IMR-90 (cell line): ENCODE measurements at regions of chr10 and their contacts with region 1.

Region 1: DNA sequence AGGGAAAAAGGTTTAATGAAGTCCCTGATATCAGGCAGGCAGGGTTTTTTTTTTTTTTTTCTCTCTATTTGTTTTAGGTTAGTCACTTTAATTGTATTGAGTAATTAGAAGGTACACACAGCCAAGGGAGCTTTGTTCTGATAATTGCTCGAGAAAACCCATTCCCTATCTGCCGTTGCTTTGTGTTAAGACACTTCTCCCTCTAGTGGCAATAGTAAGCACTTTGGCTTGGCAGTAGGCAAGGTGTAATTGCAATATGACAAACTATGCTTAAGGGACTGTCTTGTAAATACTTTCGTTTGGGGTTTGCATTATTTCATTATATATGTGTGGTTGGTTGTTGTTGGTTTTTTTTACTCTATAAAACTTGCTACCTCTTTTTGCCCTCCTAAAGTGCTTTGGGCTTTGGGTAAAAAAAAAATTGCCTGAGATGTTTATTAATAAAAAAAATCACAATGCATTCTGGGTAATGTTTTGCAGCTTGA is 113.4 kb downstream of the BTRC start:
- DNase-seq: peak; percentile 78
- ATAC-seq: peak; percentile 93
- H3K4me3 ChIP-seq: no peak overlapping the region
- H3K27ac ChIP-seq: no peak overlapping the region
- H3K4me1 ChIP-seq: peaks cover 2% of the 10 kb centered on the region; the same call in 1 of the 2 replicates
- H3K27me3 ChIP-seq: no peaks in the 10 kb centered on the region
- CTCF ChIP-seq: peak; percentile 79
- POLR2A ChIP-seq: no peak
- RAD21 ChIP-seq: peak; percentile 60

Region 2: DNA sequence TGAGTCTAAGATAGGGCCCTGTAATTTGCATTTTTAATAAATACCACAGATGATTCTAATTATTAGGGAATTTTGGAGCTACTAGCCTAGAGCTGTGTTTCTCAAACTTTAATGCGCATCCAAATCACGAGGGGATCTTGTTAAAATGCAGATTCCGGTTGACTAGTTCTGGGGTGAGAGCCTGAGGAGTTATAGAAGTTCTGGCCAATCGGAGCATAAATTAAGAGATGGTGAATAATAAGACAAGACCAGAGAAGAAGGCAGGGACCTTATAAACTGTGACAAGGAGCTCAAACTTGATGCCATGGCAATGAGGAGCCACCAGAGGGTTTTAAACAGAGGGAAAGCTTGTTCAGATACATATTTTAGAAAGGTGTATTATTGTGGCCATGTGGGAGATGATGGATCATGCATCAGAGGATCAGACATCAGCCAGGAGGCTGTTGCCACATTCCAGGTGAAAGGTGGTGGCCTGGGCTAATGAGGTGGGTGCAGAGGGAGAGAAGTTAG is 365.9 kb before region 1 on chr10:
- CTCF ChIA-PET with region 1: no interaction called
- POLR2A ChIA-PET with region 1: no interaction called
- dilution Hi-C with region 1: no loop called
- in situ Hi-C with region 1: no loop called
- intact Hi-C with region 1: no loop called
- DNase-seq: no peak
- ATAC-seq: no peak
- H3K4me3 ChIP-seq: no peak overlapping the region
- H3K27ac ChIP-seq: no peak overlapping the region
- H3K4me1 ChIP-seq: no peaks in the 10 kb centered on the region
- H3K27me3 ChIP-seq: peaks cover 69% of the 10 kb centered on the region
- CTCF ChIP-seq: no peak
- POLR2A ChIP-seq: no peak
- RAD21 ChIP-seq: no peak

Region 3: DNA sequence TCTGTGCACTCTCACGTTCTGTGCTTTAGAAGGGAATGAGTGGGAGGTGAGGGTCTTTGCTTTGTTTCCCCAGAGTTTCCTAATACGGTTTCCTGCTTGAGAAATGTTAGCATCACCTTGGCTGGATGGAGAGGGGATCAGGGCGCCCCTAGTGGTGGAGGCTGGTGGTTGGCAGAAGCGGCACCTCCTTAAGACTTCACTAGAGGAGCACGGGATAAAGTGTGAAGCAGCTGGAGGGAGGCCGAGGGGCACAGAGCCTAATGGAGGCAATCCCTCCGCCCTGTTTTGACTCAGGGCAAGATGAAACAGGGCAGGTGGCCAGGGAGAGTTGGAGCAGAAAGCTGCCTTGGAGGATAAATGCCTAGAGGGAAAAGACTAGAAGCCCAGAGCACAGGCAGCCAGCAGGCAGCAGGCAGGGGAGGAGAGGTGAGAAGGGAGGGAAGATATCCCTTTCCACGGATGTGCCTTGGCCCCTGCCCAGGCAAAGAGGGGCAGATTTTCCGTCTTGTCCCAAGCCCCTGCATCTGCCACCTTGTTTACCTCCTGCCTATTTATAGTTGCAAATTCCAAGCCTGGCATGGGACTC is 169.3 kb before region 1 on chr10:
- CTCF ChIA-PET with region 1: interaction called, 3 read pairs
- POLR2A ChIA-PET with region 1: no interaction called
- dilution Hi-C with region 1: loop called (anchors 25 kb)
- in situ Hi-C with region 1: no loop called
- intact Hi-C with region 1: no loop called
- DNase-seq: peak; percentile 39
- ATAC-seq: peak; percentile 89
- H3K4me3 ChIP-seq: no peak overlapping the region
- H3K27ac ChIP-seq: no peak overlapping the region
- H3K4me1 ChIP-seq: no peaks in the 10 kb centered on the region
- H3K27me3 ChIP-seq: peaks cover 68% of the 10 kb centered on the region
- CTCF ChIP-seq: peak; percentile 67
- POLR2A ChIP-seq: no peak
- RAD21 ChIP-seq: no peak

Region 4: DNA sequence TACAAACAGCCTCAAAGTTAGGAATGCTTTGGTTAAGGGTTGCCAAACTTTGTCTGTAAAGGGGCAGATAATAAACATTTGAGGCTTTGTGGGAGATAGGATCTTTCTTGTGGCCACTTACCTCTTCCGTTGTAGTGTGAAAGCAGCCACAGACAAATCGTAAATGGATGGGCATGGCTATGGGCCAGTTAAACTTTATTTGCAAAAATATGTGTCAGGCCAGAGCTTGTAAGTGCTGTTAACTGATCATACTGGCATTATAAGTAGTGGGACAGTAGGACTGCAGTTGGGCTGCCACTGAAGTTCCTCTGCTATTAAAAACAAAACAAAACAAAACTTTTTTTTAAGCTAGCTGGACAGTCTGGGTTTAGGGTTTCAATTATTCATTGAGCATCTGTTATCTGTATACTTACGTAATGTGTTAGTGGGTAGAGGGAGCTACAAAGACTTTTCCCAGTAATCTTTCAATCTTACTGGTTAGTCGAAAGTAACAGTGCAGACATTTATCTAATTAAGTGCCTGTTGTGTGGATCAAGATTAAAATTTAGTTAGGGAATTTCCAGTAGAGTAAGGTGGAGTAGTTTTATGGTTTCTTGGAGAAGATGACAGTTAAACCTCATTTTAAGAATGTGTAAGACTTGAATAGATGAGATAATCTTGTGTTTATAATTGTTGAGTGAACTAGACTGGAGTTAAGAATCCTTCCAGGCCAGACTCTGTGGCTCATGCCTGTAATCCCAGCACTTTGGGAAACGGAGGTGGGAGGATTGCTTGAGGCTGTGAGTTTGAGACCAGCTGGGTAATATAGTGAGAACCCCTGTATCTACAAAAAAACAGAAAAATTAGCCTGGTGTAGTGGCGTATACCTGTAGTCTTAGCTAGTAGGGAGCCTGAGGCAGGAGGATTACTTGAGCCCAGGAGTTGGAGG is 13.3 kb before region 1 on chr10:
- CTCF ChIA-PET with region 1: interaction called, 13 read pairs
- POLR2A ChIA-PET with region 1: no interaction called
- dilution Hi-C with region 1: no loop called
- in situ Hi-C with region 1: no loop called
- intact Hi-C with region 1: no loop called
- DNase-seq: peak; percentile 52
- ATAC-seq: peak; percentile 77
- H3K4me3 ChIP-seq: no peak overlapping the region
- H3K27ac ChIP-seq: no peak overlapping the region
- H3K4me1 ChIP-seq: peaks cover 2% of the 10 kb centered on the region
- H3K27me3 ChIP-seq: no peaks in the 10 kb centered on the region
- CTCF ChIP-seq: no peak
- POLR2A ChIP-seq: no peak
- RAD21 ChIP-seq: no peak

Region 5: GRCh38 chr10:101485681-101486554 is 18.6 kb after region 1 on chr10:
- CTCF ChIA-PET with region 1: interaction called, 11 read pairs
- POLR2A ChIA-PET with region 1: no interaction called
- dilution Hi-C with region 1: no loop called
- in situ Hi-C with region 1: no loop called
- intact Hi-C with region 1: no loop called
- DNase-seq: no peak
- ATAC-seq: no peak
- H3K4me3 ChIP-seq: no peak overlapping the region
- H3K27ac ChIP-seq: no peak overlapping the region
- H3K4me1 ChIP-seq: no peaks in the 10 kb centered on the region
- H3K27me3 ChIP-seq: no peaks in the 10 kb centered on the region
- CTCF ChIP-seq: no peak
- POLR2A ChIP-seq: no peak
- RAD21 ChIP-seq: no peak

Region 6: GRCh38 chr10:101512738-101513137 is 45.4 kb after region 1 on chr10:
- CTCF ChIA-PET with region 1: no interaction called
- POLR2A ChIA-PET with region 1: no interaction called
- dilution Hi-C with region 1: no loop called
- in situ Hi-C with region 1: no loop called
- intact Hi-C with region 1: no loop called
- DNase-seq: peak; percentile 78
- ATAC-seq: peak; percentile 72
- H3K4me3 ChIP-seq: no peak overlapping the region
- H3K27ac ChIP-seq: no peak overlapping the region
- H3K4me1 ChIP-seq: 0 out of 2 replicates have a peak, but pooled peaks cover 2% of the 10 kb centered on the region
- H3K27me3 ChIP-seq: no peaks in the 10 kb centered on the region
- CTCF ChIP-seq: no peak
- POLR2A ChIP-seq: no peak
- RAD21 ChIP-seq: no peak